Activated T-helper 2 cell treated with anti-CD3 and anti-CD28 coated beads, Interferon-gamma antibody, Interleukin-2, Interleukin-4, amounts not matched to agents 10 μg/mL and 5 μg/mL and 100 μg/mL, durations not matched to agents 14 hours and 24 hours and 36 hours (primary cell): ENCODE measurements at regions of chr6 and their contacts with region 1.

Region 1: DNA sequence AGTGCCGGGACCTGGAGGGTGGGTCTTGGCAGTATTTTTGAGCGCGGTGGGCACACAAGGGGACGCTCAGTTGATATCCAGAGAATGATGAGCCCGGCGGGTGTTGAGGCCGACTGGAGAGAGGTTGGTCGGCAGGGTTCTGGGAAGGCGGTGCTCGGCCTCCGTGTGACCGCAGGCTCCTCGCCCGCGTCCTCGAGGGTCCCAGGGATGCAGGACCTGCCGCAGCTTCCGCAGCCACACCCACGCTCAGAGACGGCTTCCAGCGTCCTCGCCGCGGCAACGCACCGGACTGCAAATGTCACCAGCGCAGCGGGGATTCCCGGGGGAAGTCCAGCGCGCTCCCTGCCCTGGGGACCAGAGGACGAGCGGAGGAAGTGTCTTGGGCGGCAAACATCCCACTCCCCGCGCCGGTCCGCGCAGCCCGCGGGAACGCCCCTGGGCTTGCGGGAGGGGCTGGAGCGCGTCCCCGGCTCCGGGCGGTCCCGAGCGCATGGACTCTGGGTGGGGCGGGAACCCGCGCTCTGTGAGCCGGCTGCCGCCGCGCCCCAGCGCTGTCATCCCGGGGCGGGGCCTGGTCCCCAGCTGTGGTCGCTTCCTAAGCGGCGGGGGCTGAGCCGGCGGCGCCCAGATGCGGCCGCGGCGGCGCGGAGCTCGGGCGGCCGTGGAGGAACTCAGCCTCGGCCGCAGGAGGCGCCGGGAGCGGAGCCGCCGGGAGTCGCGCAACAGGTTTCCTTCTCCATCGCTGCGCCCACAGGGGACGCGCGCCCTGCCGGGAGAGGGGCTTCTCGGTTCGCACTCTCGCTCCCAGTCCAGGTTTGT is at the start of gene STX11:
- DNase-seq: peak; percentile 79
- H3K4me3 Mint-ChIP-seq: peak within 1 kb of the TSS; percentile 84
- H3K27ac Mint-ChIP-seq: peak within 1 kb of the TSS; percentile 94
- H3K4me1 Mint-ChIP-seq: peaks cover 49% of the 10 kb centered on the region
- H3K27me3 Mint-ChIP-seq: no peaks in the 10 kb centered on the region
- total RNA-seq, gene STX11: 19.2 and 19.7 TPM in 2 replicates

Region 2: GRCh38 chr6:142162780-142163179 is 1987.3 kb before region 1 on chr6:
- intact Hi-C with region 1: loop called (anchors 5 kb)
- DNase-seq: no peak
- H3K4me3 Mint-ChIP-seq: no peak overlapping the region
- H3K27ac Mint-ChIP-seq: no peak overlapping the region
- H3K4me1 Mint-ChIP-seq: peaks cover 6% of the 10 kb centered on the region
- H3K27me3 Mint-ChIP-seq: no peaks in the 10 kb centered on the region

Region 3: GRCh38 chr6:143828572-143828971 is 321.5 kb before region 1 on chr6:
- intact Hi-C with region 1: no loop called
- DNase-seq: no peak
- H3K4me3 Mint-ChIP-seq: no peak overlapping the region
- H3K27ac Mint-ChIP-seq: no peak overlapping the region
- H3K4me1 Mint-ChIP-seq: no peaks in the 10 kb centered on the region
- H3K27me3 Mint-ChIP-seq: no peaks in the 10 kb centered on the region

Region 4: DNA sequence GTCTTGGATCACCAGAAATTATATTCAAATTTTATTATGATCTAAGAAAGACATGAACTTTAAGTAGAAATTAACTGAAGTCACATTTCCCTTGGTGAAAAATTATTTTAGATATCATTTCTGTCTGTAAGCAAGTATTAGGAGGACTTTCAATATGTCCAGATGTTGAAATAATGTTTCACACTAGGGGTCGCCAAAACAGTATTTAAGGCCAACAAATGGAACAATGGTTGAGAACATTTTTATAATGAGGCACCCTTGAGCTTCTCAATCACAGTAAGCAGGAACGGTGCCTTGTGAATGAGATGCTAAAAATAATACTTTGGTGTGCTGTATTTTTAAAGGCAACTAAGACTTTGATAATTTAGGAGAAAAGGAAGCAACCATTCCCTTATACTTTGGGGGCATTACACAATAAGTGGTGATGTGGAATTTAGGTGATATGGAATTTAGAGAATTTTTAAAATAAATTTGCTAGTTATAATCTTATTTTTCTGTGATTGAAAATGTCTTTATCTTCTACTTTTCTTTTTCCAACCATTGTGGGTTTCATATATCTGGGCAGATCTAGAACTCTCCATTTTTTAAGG is 45.1 kb before region 1 on chr6:
- intact Hi-C with region 1: loop called (anchors 2 kb)
- DNase-seq: no peak
- H3K4me3 Mint-ChIP-seq: no peak overlapping the region
- H3K27ac Mint-ChIP-seq: no peak overlapping the region
- H3K4me1 Mint-ChIP-seq: peaks cover 9% of the 10 kb centered on the region
- H3K27me3 Mint-ChIP-seq: peaks cover 6% of the 10 kb centered on the region

Region 5: DNA sequence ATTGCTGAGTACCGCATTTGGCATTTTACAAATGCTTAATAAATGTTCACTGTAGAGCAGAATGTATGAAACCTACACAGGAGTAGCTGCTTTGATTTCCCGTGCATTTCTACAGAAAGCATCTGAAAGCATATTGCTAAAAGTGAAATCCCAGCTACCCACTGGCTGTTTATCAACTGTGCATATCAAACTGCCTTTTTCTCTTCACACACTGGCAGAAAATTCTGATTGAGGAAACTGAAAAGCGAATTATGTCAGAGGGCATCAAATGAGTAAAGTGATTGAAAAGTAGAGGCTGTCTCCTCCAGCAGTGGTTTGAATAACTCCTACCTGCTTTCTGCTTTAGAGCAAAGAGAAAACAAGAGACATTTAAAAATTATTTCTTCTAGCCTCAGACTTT is 28.2 kb after region 1 on chr6:
- intact Hi-C with region 1: loop called (anchors 1 kb)
- DNase-seq: no peak
- H3K4me3 Mint-ChIP-seq: no peak overlapping the region
- H3K27ac Mint-ChIP-seq: no peak overlapping the region
- H3K4me1 Mint-ChIP-seq: peaks cover 64% of the 10 kb centered on the region
- H3K27me3 Mint-ChIP-seq: no peaks in the 10 kb centered on the region

Region 6: DNA sequence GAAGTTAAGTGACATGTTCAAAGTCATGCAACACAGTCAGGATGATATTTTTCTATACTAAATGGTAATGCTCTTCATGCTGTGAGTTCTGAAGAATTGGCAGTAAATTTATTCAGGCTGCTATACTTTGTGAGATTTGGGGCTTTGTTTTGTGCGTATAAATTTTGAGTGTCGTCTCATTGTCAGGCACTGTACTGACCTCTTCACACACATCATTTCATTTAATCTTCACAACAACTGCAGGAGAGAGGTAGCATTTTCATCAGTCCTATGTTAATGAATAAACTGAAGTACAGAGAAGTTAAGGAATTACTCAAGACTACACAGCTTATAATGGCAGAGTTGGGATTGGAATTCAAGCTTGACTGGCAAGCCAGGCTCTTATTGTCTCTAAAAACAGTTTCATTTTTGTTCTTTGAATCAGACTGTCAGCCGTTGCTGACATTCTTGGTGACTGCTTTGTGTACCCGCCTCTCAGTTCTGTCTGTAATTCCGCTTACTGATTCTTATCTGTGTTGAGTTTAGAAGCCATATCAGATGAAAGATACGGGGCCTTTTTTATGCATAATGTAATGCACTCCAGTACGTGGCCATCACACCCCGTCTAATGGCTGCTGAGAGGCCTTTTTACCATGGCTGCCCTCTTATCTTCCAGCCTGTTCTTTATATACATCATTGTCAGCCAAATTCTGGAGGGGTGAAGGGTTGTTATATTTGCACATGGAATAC is 409.9 kb after region 1 on chr6:
- intact Hi-C with region 1: loop called (anchors 5 kb)
- DNase-seq: peak; percentile 56
- H3K4me3 Mint-ChIP-seq: peak overlapping the region; percentile 60
- H3K27ac Mint-ChIP-seq: peak overlapping the region; percentile 86
- H3K4me1 Mint-ChIP-seq: peaks cover 36% of the 10 kb centered on the region
- H3K27me3 Mint-ChIP-seq: no peaks in the 10 kb centered on the region